ENCODE measurements at regions of chrX and their contacts with region 1.

Region 1: DNA sequence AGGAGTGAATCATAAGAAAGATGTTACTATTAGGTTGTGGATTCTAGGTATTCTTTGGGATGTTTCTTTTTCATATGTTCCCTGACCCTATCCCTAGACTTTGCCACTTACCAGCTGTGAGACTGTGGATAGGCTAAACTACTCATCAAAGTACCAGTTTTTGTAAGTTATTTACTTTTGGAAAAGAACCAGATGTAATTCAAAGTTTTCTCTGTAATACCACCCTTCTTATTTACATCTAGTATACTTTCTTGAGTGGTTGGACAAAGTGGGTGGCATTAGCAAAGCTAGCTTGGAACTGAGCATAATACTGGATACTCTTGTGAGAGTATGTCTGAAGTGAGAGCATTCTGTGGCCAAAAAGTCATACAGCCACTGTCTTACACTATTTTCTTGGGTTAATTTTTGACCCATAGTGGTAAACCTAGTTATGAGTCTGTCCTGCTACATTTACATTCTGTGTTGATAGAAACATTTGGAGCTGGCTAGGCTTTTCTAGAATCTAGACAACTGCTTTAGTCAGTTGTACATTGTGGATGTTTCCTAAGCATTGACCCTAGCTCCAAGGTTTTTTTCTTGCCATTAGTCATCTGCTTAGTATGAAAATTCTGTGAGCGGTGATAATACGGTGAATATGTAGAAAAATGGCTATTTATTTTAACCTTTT is 41.7 kb downstream of the KDM6A start:
- DNase-seq: no peak
- ATAC-seq: peak; percentile 42
- H3K4me3 ChIP-seq: no peak overlapping the region
- H3K27ac ChIP-seq: peak overlapping the region; percentile 76
- H3K4me1 ChIP-seq: peaks cover 22 to 23% of the 10 kb centered on the region in 2 experiments; a peak in 4 of 5 replicates
- H3K27me3 ChIP-seq: no peaks in the 10 kb centered on the region
- CTCF ChIP-seq: no peak
- EP300 ChIP-seq: no peak
- POLR2A ChIP-seq: no peak
- RAD21 ChIP-seq: no peak

Region 2: GRCh38 chrX:45070116-45071007 is 155.7 kb after region 1 on chrX:
- CTCF ChIA-PET with region 1: no interaction called
- POLR2A ChIA-PET with region 1: no interaction called
- in situ Hi-C with region 1: no loop called
- intact Hi-C with region 1: loop called (anchors 10 kb)
- DNase-seq: peak; percentile 10 to 58 (median 14)
- ATAC-seq: peak; percentile 83
- H3K4me3 ChIP-seq: no peak overlapping the region
- H3K27ac ChIP-seq: no peak overlapping the region
- H3K4me1 ChIP-seq: no peaks in the 10 kb centered on the region
- H3K27me3 ChIP-seq: no peaks in the 10 kb centered on the region
- CTCF ChIP-seq: peak; percentile 39 to 67 (median 57)
- EP300 ChIP-seq: no peak
- POLR2A ChIP-seq: no peak
- RAD21 ChIP-seq: peak; percentile 55 to 62

Region 3: GRCh38 chrX:46072791-46073190 is 1158.1 kb after region 1 on chrX:
- CTCF ChIA-PET with region 1: no interaction called
- POLR2A ChIA-PET with region 1: no interaction called
- in situ Hi-C with region 1: no loop called
- intact Hi-C with region 1: no loop called
- DNase-seq: no peak
- ATAC-seq: no peak
- H3K4me3 ChIP-seq: no peak overlapping the region
- H3K27ac ChIP-seq: no peak overlapping the region
- H3K4me1 ChIP-seq: no peaks in the 10 kb centered on the region
- H3K27me3 ChIP-seq: no peaks in the 10 kb centered on the region
- CTCF ChIP-seq: no peak
- EP300 ChIP-seq: no peak
- POLR2A ChIP-seq: no peak
- RAD21 ChIP-seq: no peak